ENCODE measurements at regions of chr14 and their contacts with region 1.

Region 1: DNA sequence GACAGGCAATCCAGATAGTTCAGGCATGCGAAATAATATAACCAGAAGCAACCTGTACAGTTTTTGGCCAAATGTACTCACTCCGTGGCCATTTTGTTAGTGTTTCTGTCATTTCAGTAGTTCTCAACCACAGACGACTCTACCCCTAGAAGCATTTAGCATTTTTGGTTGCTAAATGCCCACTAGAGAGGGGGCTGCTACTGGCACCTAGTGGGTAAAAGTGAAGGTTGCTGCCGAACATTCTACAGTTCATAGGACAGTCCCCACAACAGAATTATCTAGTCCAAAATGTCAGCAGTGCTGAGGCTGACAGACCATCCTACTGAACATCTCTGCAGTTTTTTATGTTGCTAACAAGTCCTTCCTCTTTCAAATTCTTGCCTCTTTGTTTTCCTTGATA is 107.4 kb downstream of the TSHR start:
- DNase-seq: no peak
- H3K4me3 Mint-ChIP-seq: no peak overlapping the region
- H3K27ac Mint-ChIP-seq: no peak overlapping the region
- H3K4me1 Mint-ChIP-seq: no peaks in the 10 kb centered on the region
- H3K27me3 Mint-ChIP-seq: peaks cover 3% of the 10 kb centered on the region

Region 2: DNA sequence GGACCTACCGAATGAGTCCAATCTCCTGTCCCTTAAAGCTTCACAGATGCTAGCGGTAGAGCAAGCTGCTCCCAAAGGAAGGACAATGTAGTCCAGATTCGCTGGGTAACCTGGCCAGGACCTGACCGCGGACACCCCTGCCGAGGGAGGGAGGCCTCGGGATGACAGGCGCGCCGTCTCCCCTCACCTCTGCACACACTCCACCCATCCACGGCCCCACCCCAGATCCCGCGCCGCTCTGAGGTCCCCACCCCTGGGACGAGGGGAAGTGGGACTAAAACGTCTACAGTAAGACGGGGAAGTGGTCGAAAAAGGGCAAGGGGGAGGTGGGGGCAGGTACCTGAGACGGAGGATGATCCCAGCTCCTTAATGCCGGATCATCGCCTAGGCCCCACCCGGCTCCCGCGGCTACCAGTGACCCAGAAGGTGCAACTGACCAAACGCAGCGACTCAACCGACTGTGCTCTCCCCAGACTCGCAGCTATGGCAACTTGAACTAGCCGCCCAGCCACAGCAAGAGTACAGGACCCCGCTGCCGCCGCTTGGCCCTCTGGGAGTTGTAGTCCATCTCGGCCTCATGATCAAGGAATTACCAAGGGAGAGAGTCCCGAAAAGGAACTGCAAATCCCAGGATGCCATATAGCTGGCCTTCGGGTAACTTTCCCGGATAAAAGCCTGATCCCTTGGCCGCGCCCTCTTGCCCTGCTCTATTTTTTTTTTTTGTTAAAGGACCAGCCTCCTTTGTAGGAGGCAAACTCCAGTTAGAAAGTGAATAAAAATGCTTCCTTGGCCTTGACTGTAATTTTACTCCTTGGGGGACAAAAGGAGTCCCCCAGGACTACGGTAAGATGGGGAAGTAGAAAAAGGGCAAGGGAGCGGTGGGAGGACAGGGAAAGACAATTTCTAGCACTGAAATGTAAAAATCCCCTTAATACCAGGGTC is 121.3 kb before region 1 on chr14 and contains the start of gene CEP128:
- intact Hi-C with region 1: no loop called
- DNase-seq: peak; percentile 79
- H3K4me3 Mint-ChIP-seq: peak within 1 kb of the TSS; percentile 88
- H3K27ac Mint-ChIP-seq: peak within 1 kb of the TSS; percentile 88
- H3K4me1 Mint-ChIP-seq: peaks cover 30% of the 10 kb centered on the region
- H3K27me3 Mint-ChIP-seq: no peaks in the 10 kb centered on the region
- total RNA-seq, gene CEP128: 18.2 and 22.0 TPM in 2 replicates

Region 3: DNA sequence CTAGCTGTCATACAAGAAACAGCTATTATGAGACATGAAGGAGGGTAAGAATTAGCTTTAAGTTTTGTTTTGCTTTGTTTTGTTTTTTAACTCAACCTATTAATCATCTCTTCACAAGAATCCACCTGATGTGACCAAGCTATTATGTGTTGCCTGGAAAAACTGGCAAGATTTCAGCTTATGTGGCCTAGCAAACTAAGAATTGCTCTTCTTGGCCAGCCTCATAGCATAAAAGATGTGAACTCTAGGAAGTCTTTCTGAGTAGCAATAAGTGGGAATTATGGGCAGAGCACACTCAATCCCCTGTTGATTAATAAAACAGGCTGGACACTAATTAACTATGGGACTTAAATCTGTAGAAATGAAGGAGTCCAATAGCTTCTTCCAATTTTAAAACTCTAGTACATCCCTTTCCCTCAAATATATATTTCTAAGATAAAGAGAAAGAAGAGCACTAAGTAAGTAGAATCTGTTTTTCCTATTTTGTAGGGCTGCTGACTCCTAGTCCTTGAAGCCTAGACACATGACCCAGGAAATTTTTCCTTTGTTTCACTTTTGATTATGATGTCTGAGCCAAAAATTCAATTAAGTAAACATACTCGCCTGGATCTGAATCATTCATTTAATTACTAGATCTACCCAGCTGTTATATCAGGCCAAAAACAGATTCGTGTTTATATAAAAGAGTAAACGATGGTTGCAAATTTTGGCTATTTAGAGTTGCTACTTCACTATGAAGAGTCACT is 82.2 kb after region 1 on chr14:
- intact Hi-C with region 1: loop called (anchors 5 kb)
- DNase-seq: no peak
- H3K4me3 Mint-ChIP-seq: no peak overlapping the region
- H3K27ac Mint-ChIP-seq: no peak overlapping the region
- H3K4me1 Mint-ChIP-seq: peaks cover 15% of the 10 kb centered on the region
- H3K27me3 Mint-ChIP-seq: no peaks in the 10 kb centered on the region

Measured in activated T-helper 1 cell treated with anti-CD3 and anti-CD28 coated beads, Interleukin-12 subunit alpha, Interleukin-12 subunit beta, Interleukin-2, Interleukin-4 antibody, amounts not matched to agents 30 ng/mL and 10 ng/mL and 1 ng/mL, durations not matched to agents 14 hours and 24 hours and 36 hours (primary cell).